Uterus (tissue), 4 donors: ENCODE measurements at regions of chr10 and their contacts with region 1.

Region 1: GRCh38 chr10:125000366-125001312 is 58.7 kb downstream of the ZRANB1 start:
- DNase-seq: peak; percentile 35 to 40
- H3K4me3 ChIP-seq: no peak overlapping the region
- H3K27ac ChIP-seq: peak overlapping the region; percentile 63 to 65
- H3K4me1 ChIP-seq: peaks cover 12 to 27% of the 10 kb centered on the region in 2 donors
- H3K27me3 ChIP-seq: no peaks in the 10 kb centered on the region
- CTCF ChIP-seq: no peak
- POLR2A ChIP-seq: no peak

Region 2: DNA sequence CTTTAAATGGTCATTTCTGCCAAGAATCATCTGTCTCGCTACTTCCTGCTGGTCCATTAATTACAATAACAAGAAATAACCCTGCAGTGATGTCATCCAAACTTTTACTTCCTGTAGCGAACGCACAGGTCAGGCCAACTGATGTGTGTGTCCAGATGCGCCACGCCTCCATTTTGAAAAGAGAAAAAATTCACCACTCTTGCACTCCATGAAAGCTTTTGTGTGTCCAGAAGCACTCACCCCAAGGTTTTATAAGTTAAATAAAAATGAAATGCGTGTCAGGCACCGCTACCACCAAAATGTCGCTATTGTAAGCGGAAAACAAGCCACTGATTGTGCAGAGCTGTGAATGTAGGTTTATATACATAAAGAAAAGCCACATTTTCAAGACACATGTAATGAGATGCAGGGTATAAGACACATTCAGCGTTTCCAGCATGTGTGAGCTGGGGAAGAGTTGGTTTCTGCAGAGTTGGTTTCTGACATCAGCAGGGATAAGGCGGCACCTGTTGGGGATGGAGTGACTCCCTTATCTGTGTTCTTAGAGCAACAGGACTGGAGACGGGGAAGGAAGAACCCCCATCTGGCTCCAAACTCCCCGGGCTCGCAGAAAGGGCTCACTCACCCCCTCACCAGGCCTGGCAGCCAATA is 76.4 kb after region 1 on chr10:
- intact Hi-C with region 1: loop called (anchors 10 kb)
- DNase-seq: no peak
- H3K4me3 ChIP-seq: no peak overlapping the region
- H3K27ac ChIP-seq: peak overlapping the region; percentile 3 to 8
- H3K4me1 ChIP-seq: peaks cover 3 to 8% of the 10 kb centered on the region in 2 donors
- H3K27me3 ChIP-seq: no peaks in the 10 kb centered on the region
- CTCF ChIP-seq: no peak
- POLR2A ChIP-seq: no peak